Breast epithelium (tissue), 4 donors: ENCODE measurements at regions of chr10 and their contacts with region 1.

Region 1: GRCh38 chr10:3239920-3240894 is 67.6 kb upstream of the PITRM1 start:
- DNase-seq: no peak
- H3K4me3 ChIP-seq: peak overlapping the region in 1 of 3 donors; percentile 19
- H3K27ac ChIP-seq: peak overlapping the region; percentile 33 to 64
- H3K4me1 ChIP-seq: no peaks in the 10 kb centered on the region
- H3K27me3 ChIP-seq: no peaks in the 10 kb centered on the region
- CTCF ChIP-seq: no peak
- POLR2A ChIP-seq: no peak

Region 2: GRCh38 chr10:3270577-3271316 is 30.5 kb after region 1 on chr10:
- intact Hi-C with region 1: no loop called
- DNase-seq: no peak
- H3K4me3 ChIP-seq: no peak overlapping the region
- H3K27ac ChIP-seq: no peak overlapping the region
- H3K4me1 ChIP-seq: no peaks in the 10 kb centered on the region
- H3K27me3 ChIP-seq: no peaks in the 10 kb centered on the region
- CTCF ChIP-seq: no peak
- POLR2A ChIP-seq: no peak

Region 3: GRCh38 chr10:4649886-4650508 is 1409.8 kb after region 1 on chr10:
- intact Hi-C with region 1: loop called (anchors 5 kb)
- DNase-seq: no peak
- H3K4me3 ChIP-seq: no peak overlapping the region
- H3K27ac ChIP-seq: peak overlapping the region; percentile 28 to 30
- H3K4me1 ChIP-seq: no peaks in the 10 kb centered on the region
- H3K27me3 ChIP-seq: no peaks in the 10 kb centered on the region
- CTCF ChIP-seq: no peak
- POLR2A ChIP-seq: no peak